ENCODE measurements at regions of chr4 and their contacts with region 1.

Region 1: GRCh38 chr4:7295911-7296660 is 103.7 kb downstream of the SORCS2 start:
- DNase-seq: no peak
- H3K4me3 ChIP-seq: no peak overlapping the region
- CTCF ChIP-seq: peak; percentile 79

Region 2: DNA sequence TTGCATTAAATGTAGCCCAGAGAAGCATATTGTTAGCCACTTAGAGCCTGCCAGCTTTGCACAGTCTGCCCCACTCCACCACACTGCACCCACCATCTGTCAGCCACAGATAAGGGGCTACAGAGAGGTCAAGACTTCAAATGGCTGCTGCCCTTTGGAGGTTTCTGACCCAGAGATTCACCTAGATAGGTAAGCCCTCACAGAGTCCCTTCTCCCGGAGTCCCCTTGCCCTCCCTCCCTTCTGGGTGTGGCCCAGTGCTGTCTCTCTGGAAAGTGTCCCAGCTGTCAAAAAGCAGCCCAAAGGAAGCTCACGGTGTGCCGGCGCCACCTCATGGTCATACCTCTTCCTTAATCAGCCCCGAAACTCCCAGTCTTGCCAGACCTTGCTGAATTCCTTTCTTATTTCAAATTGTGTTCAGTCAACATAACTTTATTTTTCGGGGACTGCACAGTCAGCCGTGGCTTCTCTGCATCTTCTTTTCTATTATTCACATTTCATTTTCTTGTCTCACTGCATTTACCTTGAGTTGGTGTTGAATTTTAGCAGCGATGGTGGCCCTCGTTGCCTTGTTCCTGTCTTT is 214.1 kb before region 1 on chr4:
- CTCF ChIA-PET with region 1: no interaction called
- POLR2A ChIA-PET with region 1: no interaction called
- DNase-seq: no peak
- H3K4me3 ChIP-seq: no peak overlapping the region
- CTCF ChIP-seq: peak; percentile 41

Region 3: GRCh38 chr4:7276515-7276914 is 19.6 kb before region 1 on chr4:
- CTCF ChIA-PET with region 1: interaction called, 11 read pairs
- POLR2A ChIA-PET with region 1: no interaction called
- DNase-seq: no peak
- H3K4me3 ChIP-seq: no peak overlapping the region
- CTCF ChIP-seq: no peak

Region 4: DNA sequence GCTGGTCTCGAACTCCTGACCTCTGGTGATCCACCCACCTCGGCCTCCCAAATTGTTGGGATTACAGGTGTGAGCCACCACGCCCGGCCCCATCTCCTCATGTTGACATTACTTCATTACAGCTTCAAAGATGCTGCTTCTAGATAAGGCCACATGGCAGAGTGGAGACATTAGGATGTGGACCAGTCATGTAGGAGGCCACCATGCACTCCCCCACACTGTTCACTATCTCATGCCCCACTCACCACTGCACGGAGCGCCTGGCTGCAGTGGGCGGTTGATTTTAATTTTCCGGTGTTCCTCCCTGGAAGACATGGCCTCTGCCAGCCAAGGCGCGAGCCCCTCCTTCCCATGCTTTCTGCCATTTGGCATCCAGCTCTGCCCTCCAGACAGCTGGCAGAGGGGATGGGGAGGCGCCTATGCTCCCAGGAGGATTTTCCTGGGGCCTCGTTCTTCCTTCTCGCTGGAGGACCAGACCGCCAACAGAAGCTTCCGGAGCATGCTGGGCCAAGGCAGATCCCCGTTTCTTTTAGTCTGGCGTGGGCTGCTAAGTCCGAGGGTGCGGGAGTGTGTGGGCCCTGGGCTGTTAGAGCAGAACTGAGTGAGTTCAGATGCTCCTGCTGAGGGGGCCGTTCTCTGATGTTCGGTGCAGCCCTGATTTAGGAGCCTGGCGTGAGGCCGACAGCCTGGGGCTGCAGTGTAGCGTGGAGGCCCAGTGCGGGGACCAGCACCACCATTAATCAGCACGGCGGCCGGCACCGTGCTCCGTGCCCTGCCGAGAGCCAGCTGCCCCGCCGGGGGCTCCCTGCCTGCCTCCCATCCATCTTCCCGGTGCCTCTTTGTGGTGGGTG is 10.6 kb before region 1 on chr4:
- CTCF ChIA-PET with region 1: interaction called, 10 read pairs
- POLR2A ChIA-PET with region 1: no interaction called
- DNase-seq: no peak
- H3K4me3 ChIP-seq: no peak overlapping the region
- CTCF ChIP-seq: no peak

Region 5: GRCh38 chr4:7307394-7308099 is 11.5 kb after region 1 on chr4:
- CTCF ChIA-PET with region 1: interaction called, 16 read pairs
- POLR2A ChIA-PET with region 1: no interaction called
- DNase-seq: no peak
- H3K4me3 ChIP-seq: no peak overlapping the region
- CTCF ChIP-seq: no peak